ENCODE measurements at regions of chr17 and their contacts with region 1.

Region 1: DNA sequence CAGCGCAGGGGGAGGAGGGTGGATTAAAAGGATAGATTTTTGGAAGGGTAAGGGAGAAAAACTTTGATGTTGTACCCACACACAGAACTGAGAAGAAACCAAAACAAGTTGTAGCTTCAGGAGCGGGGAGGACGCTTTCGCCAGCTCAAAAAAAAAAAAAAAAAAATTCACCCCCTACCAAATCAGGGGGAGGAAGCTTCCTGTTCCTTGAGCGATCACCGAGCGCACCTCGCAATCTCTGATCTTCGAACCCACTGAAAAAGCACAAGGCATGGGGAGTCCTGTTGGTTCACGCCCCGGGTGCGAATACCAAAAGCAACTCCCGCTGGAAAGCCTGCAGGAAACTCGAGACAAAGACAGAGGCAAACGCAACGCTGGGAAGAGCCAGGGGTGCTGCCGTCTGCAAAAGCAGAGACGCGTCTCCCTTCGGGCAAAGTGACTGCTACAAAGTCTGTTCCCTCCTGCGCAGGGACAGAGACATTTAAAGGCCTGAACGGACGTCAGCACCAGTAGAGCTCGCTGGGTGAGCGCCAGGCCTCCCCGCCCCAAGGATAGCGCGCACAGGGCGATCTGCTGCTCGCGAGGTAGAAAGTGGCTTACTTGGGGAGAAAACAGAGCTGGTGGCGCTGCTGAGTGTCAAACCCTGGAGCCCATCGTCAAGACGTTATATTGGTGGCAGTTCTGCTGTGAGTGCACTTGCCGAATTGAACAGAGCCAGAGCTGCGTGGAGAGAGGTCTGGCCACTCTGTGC is 190.4 kb downstream of the USP22 start:
- DNase-seq: no peak
- ATAC-seq: peak; percentile 57
- H3K4me3 ChIP-seq: peak overlapping the region; percentile 29; the same call in 1 of the 2 replicates
- H3K27ac ChIP-seq: no peak overlapping the region
- H3K4me1 ChIP-seq: no peaks in the 10 kb centered on the region; the same call in 1 of the 2 replicates
- H3K27me3 ChIP-seq: peaks cover 21% of the 10 kb centered on the region
- CTCF ChIP-seq: no peak
- POLR2A ChIP-seq: no peak
- RAD21 ChIP-seq: no peak

Region 2: GRCh38 chr17:20800146-20800545 is 52.3 kb before region 1 on chr17:
- CTCF ChIA-PET with region 1: no interaction called
- POLR2A ChIA-PET with region 1: no interaction called
- dilution Hi-C with region 1: no loop called
- in situ Hi-C with region 1: no loop called
- intact Hi-C with region 1: no loop called
- DNase-seq: no peak
- ATAC-seq: no peak
- H3K4me3 ChIP-seq: no peak overlapping the region
- H3K27ac ChIP-seq: no peak overlapping the region
- H3K4me1 ChIP-seq: no peaks in the 10 kb centered on the region
- H3K27me3 ChIP-seq: no peaks in the 10 kb centered on the region
- CTCF ChIP-seq: no peak
- POLR2A ChIP-seq: no peak
- RAD21 ChIP-seq: no peak

Region 3: GRCh38 chr17:20908373-20909273 is 56.2 kb after region 1 on chr17:
- CTCF ChIA-PET with region 1: no interaction called
- POLR2A ChIA-PET with region 1: no interaction called
- dilution Hi-C with region 1: no loop called
- in situ Hi-C with region 1: no loop called
- intact Hi-C with region 1: loop called (anchors 10 kb)
- DNase-seq: peak; percentile 53
- ATAC-seq: peak; percentile 100
- H3K4me3 ChIP-seq: peak overlapping the region; percentile 63
- H3K27ac ChIP-seq: peak overlapping the region; percentile 78
- H3K4me1 ChIP-seq: no peaks in the 10 kb centered on the region
- H3K27me3 ChIP-seq: no peaks in the 10 kb centered on the region
- CTCF ChIP-seq: peak; percentile 59
- POLR2A ChIP-seq: no peak
- RAD21 ChIP-seq: peak; percentile 46